Astrocyte of the cerebellum (primary cell): ENCODE measurements at regions of chr4 and their contacts with region 1.

Region 1: GRCh38 chr4:185761352-185762235 is 50.4 kb downstream of the SORBS2 start:
- DNase-seq: no peak
- H3K4me3 ChIP-seq: no peak overlapping the region
- CTCF ChIP-seq: no peak

Region 2: DNA sequence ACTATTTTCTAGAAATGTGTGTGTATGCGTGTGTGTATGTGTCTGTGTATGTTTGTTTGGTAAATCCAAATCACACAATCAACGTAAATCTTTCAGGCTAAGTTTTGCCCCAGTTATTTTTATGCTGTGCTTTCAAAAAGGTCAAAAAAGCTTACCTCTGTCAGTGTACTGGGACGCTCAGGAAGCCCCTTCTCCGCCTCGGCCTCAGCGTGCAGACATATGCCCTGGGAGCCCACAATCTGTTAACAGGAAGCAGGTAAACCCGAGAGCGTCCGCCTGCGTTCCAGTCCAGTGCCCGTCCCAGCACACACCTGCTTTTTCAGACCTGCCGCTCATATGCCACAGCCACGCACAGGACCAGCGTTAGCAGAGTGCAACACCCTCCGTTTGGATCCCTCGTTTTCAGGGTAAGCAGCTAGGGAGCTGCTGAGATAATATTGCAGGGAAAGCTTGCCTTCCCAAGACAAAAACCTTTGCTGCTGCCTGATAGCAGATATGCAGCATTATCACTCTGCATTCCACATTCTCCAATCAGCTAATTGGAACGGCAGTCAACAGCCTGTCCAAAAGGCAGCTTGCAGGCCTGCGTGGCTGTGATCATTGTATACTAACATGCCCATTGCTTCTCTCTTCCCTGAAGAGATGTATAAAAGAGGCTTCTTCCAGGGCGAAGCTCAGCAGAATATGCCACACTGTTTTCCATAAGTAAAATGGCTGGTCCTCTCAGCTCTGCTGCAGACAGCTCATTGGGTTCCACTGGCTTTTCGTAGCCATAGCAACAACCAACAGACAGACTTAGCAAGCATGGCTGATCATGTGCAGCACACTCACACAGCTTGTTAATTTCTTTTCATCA is 50.1 kb after region 1 on chr4 and contains the start of gene SORBS2:
- in situ Hi-C with region 1: no loop called
- DNase-seq: peak; percentile 59
- H3K4me3 ChIP-seq: peak within 1 kb of the TSS; percentile 34
- CTCF ChIP-seq: no peak

Region 3: DNA sequence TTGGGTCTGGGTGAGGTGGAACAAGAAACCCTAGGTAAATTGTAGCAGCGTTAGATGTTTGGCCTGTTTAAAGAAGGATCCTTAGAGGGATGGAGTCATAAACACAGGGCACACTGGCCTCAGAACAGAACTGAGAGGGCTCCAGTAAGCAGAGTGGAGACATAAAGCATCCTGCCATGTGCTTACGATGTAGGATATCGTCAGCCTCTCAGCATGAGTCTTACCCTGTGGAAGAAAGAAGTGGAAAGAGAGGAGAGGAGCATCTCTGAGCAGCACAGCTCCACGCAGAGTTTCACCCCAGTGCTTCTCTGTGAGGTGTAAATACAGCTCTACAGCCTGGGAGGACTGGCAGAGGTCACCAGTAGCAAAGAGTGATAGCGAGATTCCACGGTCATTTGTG is 78.2 kb after region 1 on chr4:
- in situ Hi-C with region 1: loop called (anchors 5 kb)
- DNase-seq: no peak
- H3K4me3 ChIP-seq: no peak overlapping the region
- CTCF ChIP-seq: no peak